A673 (cell line): ENCODE measurements at regions of chr1 and their contacts with region 1.

Region 1: GRCh38 chr1:101238681-101239094 is 1.9 kb downstream of the S1PR1 start:
- DNase-seq: peak; percentile 91
- H3K4me3 ChIP-seq: peak overlapping the region; percentile 54
- H3K27ac ChIP-seq: no peak overlapping the region
- H3K4me1 ChIP-seq: peaks cover 12% of the 10 kb centered on the region
- H3K27me3 ChIP-seq: no peaks in the 10 kb centered on the region
- CTCF ChIP-seq: peak; percentile 95

Region 2: DNA sequence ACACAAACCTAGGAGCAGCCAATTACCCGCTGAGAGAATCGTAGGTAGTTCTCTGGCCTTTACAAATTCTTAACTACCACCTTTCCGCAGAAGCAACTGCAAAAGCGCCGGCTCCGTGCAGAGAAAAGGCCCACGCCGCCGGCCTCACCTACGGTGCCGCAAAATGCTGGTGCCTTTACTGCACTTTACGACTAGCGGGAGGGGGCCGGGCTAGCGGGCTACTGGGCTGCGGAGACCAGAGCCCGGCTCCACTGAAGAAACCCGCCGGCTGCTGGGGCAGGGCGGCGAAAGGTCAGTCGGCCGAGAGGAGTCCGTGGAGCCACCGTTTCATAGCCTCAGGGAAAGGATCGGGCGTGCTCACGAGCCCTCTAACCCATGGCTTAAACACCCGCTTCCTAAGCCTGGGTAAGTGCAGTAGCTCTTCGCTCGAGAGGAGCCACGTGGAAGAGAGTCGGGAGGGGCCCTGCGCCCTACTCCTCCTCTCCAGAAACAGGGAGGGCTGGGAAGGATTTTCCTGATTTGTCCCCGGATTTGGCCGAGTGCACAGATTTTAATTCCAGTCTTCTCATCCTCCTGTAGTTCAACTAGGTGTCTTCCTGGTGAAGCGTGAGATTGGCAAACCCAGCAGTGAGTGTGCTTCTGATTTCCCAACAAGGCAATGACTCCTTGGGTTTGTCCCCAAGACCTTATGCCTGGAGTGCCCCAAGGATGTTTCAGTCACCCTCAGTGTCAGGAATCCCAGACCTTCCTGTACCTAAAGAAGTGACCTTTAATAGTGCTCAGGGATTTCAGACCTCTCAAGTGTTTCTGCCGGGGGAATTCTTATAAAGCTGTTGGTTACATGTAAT is 212.8 kb before region 1 on chr1 and contains the start of gene DPH5:
- CTCF ChIA-PET with region 1: no interaction called
- POLR2A ChIA-PET with region 1: no interaction called
- intact Hi-C with region 1: loop called (anchors 5 kb)
- DNase-seq: peak; percentile 95
- H3K4me3 ChIP-seq: peak within 1 kb of the TSS; percentile 66
- H3K27ac ChIP-seq: peak within 1 kb of the TSS; percentile 76
- H3K4me1 ChIP-seq: peaks cover 27% of the 10 kb centered on the region
- H3K27me3 ChIP-seq: no peaks in the 10 kb centered on the region
- CTCF ChIP-seq: no peak
- total RNA-seq, gene DPH5: 43.2 and 50.5 TPM in 2 replicates

Region 3: GRCh38 chr1:101338714-101339430 is 100.2 kb after region 1 on chr1:
- CTCF ChIA-PET with region 1: no interaction called
- POLR2A ChIA-PET with region 1: no interaction called
- intact Hi-C with region 1: no loop called
- DNase-seq: no peak
- H3K4me3 ChIP-seq: no peak overlapping the region
- H3K27ac ChIP-seq: no peak overlapping the region
- H3K4me1 ChIP-seq: no peaks in the 10 kb centered on the region
- H3K27me3 ChIP-seq: no peaks in the 10 kb centered on the region
- CTCF ChIP-seq: no peak